Common myeloid progenitor, CD34-positive (primary cell): ENCODE measurements at regions of chr21 and their contacts with region 1.

Region 1: GRCh38 chr21:29849735-29850176 is 90.0 kb downstream of the GRIK1 start:
- DNase-seq: peak; percentile 53 to 81 (median 69)
- H3K4me3 ChIP-seq: no peak overlapping the region
- H3K27ac ChIP-seq: no peak overlapping the region
- H3K4me1 ChIP-seq: no peaks in the 10 kb centered on the region
- H3K27me3 ChIP-seq: no peaks in the 10 kb centered on the region

Region 2: GRCh38 chr21:29477941-29478340 is 371.8 kb before region 1 on chr21:
- CTCF ChIA-PET with region 1: interaction called, 45 read pairs
- POLR2A ChIA-PET with region 1: interaction called, 3 read pairs
- DNase-seq: peak in 2 of 3 donors; percentile 17 to 21
- H3K4me3 ChIP-seq: no peak overlapping the region
- H3K27ac ChIP-seq: no peak overlapping the region
- H3K4me1 ChIP-seq: peaks cover 0 to 4% (median 2%) of the 10 kb centered on the region in 4 experiments
- H3K27me3 ChIP-seq: peaks cover 0 to 28% (median 11%) of the 10 kb centered on the region in 5 experiments

Region 3: DNA sequence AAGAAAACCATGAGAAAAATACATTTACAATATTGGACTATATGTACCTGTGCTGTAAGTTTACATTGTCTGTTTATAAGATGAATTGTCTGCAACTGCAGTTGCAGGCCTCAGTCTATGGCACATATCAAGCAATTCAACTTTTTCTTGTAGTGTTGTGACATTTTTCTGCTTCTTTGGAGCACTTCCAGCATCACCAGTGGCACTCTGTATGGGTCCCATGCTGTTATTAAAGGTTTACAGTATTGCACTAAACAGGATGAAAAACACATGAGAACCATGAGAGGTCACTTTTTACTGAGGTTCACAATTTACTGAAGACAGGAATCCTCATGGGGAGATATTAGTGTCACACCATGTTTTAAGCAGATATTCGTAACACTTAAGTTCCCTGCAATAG is 28.5 kb before region 1 on chr21:
- CTCF ChIA-PET with region 1: no interaction called
- POLR2A ChIA-PET with region 1: no interaction called
- DNase-seq: no peak
- H3K4me3 ChIP-seq: no peak overlapping the region
- H3K27ac ChIP-seq: no peak overlapping the region
- H3K4me1 ChIP-seq: no peaks in the 10 kb centered on the region
- H3K27me3 ChIP-seq: no peaks in the 10 kb centered on the region

Region 4: GRCh38 chr21:29834617-29835016 is 15.1 kb before region 1 on chr21:
- CTCF ChIA-PET with region 1: no interaction called
- POLR2A ChIA-PET with region 1: no interaction called
- DNase-seq: no peak
- H3K4me3 ChIP-seq: no peak overlapping the region
- H3K27ac ChIP-seq: no peak overlapping the region
- H3K4me1 ChIP-seq: no peaks in the 10 kb centered on the region
- H3K27me3 ChIP-seq: no peaks in the 10 kb centered on the region

Region 5: GRCh38 chr21:29860346-29860745 is 10.6 kb after region 1 on chr21:
- CTCF ChIA-PET with region 1: interaction called, 14 read pairs
- POLR2A ChIA-PET with region 1: no interaction called
- DNase-seq: no peak
- H3K4me3 ChIP-seq: no peak overlapping the region
- H3K27ac ChIP-seq: no peak overlapping the region
- H3K4me1 ChIP-seq: peaks cover 0 to 9% (median 5%) of the 10 kb centered on the region in 4 experiments
- H3K27me3 ChIP-seq: no peaks in the 10 kb centered on the region

Region 6: GRCh38 chr21:30027986-30028385 is 178.2 kb after region 1 on chr21:
- CTCF ChIA-PET with region 1: no interaction called
- POLR2A ChIA-PET with region 1: no interaction called
- DNase-seq: no peak
- H3K4me3 ChIP-seq: no peak overlapping the region
- H3K27ac ChIP-seq: no peak overlapping the region
- H3K4me1 ChIP-seq: no peaks in the 10 kb centered on the region
- H3K27me3 ChIP-seq: no peaks in the 10 kb centered on the region